Calu3 (cell line): ENCODE measurements at regions of chr17 and their contacts with region 1.

Region 1: DNA sequence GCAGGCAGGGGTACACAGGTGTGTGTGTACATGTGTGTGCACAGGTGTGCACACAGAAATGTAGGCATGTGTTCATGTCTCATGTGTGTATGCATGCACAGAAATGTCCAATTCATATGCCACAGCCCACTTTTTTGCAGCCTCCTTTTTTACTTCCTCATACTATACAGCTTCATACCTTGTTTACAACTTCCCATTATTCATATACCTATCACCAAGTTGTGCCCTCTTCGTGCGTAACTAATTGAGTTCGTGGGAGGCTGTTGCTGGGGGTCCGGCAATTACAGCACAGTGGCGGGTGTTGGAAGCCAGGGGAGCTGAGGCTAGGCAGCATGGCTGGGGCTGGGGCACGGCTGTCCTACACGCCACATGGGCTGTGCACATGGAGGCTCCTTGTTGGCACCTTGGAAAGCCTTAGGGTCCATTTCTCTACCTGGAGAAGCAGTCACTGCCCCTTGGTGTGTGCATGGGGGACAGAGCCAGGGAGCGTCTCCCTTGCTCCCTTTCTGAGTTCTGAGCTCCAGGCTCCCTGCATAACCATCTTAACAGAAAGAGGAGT is 266.7 kb downstream of the ENGASE start:
- DNase-seq: no peak
- H3K4me3 Mint-ChIP-seq: no peak overlapping the region
- H3K27ac Mint-ChIP-seq: no peak overlapping the region
- H3K4me1 Mint-ChIP-seq: no peaks in the 10 kb centered on the region
- H3K27me3 Mint-ChIP-seq: peaks cover 97% of the 10 kb centered on the region
- CTCF ChIP-seq: no peak

Region 2: GRCh38 chr17:80219013-80219762 is 877.9 kb after region 1 on chr17:
- CTCF ChIA-PET with region 1: interaction called, 22 read pairs
- intact Hi-C with region 1: no loop called
- DNase-seq: peak; percentile 81
- H3K4me3 Mint-ChIP-seq: peak overlapping the region; percentile 92
- H3K27ac Mint-ChIP-seq: peak overlapping the region; percentile 79
- H3K4me1 Mint-ChIP-seq: peaks cover 19% of the 10 kb centered on the region
- H3K27me3 Mint-ChIP-seq: peaks cover 8% of the 10 kb centered on the region
- CTCF ChIP-seq: no peak